CD8-positive, alpha-beta memory T cell (primary cell): ENCODE measurements at regions of chr2 and their contacts with region 1.

Region 1: DNA sequence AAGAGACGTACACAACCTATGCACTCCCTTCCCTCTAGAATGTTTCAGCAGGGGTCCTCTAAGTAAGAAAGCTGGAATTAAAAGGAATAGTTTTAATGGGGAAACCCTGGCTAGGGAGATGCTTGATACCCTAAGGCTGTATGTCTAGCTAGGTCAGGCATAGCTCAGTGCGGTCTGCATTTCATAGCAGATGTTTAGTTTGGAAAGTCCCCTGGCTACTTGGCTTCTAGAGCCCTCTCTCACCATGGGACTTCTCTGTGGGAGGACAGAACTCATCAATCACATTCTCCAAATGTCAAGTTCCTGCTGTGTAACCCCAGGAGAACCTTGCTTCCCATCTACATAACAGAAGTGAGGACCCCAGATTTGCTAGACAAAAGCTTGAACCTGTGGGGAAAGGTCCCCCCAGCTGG is 24.1 kb upstream of the ANXA4 start:
- DNase-seq: no peak
- H3K4me3 ChIP-seq: no peak overlapping the region
- H3K4me3 Mint-ChIP-seq: no peak overlapping the region
- H3K27ac ChIP-seq: no peak overlapping the region
- H3K27ac Mint-ChIP-seq: no peak overlapping the region
- H3K4me1 ChIP-seq: peaks cover 7% of the 10 kb centered on the region
- H3K4me1 Mint-ChIP-seq: peaks cover 9 to 12% (median 12%) of the 10 kb centered on the region in 3 donors
- H3K27me3 ChIP-seq: no peaks in the 10 kb centered on the region
- H3K27me3 Mint-ChIP-seq: peaks cover 0 to 3% of the 10 kb centered on the region in 2 donors

Region 2: DNA sequence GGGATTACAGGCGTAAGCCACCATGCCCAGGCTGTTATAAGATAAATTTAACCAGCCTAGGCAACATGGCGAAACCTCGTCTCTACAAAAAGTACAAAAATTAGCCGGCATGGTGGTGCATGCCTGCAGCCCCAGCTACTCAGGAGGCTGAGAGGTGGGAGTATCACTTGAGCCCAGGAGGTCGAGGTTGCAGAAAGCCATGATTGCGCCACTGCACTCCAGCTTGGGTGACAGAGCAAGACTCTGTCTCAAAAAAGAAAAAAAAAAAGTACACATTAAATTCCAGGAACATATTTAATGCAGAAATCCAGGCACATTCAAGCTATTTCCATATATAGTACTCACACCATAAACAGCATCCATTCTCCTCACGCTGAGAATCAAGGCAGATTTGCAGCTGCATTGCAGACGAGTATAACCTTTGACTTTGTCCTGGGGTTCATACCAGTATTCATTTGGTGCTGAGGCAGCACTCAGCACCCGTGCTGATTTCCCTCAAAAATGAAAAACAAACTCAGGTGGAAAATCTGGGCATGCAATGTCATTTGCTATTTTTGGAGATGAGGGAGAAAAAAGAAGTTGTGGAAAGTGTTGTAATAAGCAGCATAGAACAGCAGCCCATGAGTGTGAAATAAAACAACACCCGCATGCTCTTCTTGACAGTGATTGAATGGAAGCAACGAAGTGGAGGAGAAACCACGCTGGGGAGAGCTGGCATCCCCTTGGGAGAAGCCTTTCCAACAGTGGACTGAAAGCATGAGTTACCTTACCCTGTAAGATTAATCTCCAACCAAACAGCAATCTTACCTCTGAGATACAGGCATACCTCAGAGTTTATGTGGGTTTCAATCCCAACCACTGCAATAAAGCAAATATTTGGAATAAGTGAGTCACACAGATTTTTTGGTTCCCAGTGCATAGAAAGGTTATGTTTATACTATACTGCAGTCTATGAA is 22.7 kb before region 1 on chr2:
- CTCF ChIA-PET with region 1: interaction called, 12 read pairs
- POLR2A ChIA-PET with region 1: no interaction called
- DNase-seq: no peak
- H3K4me3 ChIP-seq: no peak overlapping the region
- H3K4me3 Mint-ChIP-seq: peak overlapping the region in 6 of 7 donors; percentile 44 to 87 (median 58)
- H3K27ac ChIP-seq: no peak overlapping the region
- H3K27ac Mint-ChIP-seq: peak overlapping the region in 7 of 8 donors; percentile 6 to 95 (median 77)
- H3K4me1 ChIP-seq: peaks cover 84% of the 10 kb centered on the region
- H3K4me1 Mint-ChIP-seq: peaks cover 78 to 95% (median 94%) of the 10 kb centered on the region in 3 donors
- H3K27me3 ChIP-seq: no peaks in the 10 kb centered on the region
- H3K27me3 Mint-ChIP-seq: no peaks in the 10 kb centered on the region

Region 3: DNA sequence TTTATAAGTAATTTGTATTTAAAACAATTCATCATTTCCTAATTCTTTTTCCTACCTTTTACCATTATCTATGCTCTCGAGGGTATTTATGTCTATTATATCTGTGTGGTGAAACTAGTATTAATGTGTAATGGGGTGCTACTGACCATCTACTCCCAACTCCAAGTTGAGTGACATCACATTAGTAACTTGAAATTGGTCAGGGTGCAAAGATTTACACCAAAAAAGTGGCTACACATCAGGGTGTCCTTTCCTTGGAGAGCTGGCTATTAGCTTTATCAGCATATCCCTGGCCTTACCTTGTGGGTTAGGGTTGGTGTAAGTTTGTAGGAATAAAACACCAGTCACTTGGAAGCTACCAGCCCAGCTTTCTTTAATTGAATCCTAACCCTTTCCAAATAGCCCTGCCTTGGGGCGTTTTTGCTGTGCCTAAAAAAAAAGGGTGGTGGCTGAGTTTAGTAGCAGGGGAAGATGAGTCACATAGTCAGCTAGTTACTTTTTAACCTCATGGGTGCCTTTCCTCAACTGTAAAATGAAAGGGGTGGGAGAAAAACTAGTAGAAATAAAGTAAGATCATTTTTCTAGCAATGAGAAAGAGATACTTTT is 38.1 kb after region 1 on chr2:
- CTCF ChIA-PET with region 1: no interaction called
- POLR2A ChIA-PET with region 1: no interaction called
- DNase-seq: no peak
- H3K4me3 ChIP-seq: no peak overlapping the region
- H3K4me3 Mint-ChIP-seq: no peak overlapping the region
- H3K27ac ChIP-seq: no peak overlapping the region
- H3K27ac Mint-ChIP-seq: no peak overlapping the region
- H3K4me1 ChIP-seq: no peaks in the 10 kb centered on the region
- H3K4me1 Mint-ChIP-seq: peaks cover 16 to 22% (median 21%) of the 10 kb centered on the region in 3 donors
- H3K27me3 ChIP-seq: no peaks in the 10 kb centered on the region
- H3K27me3 Mint-ChIP-seq: no peaks in the 10 kb centered on the region